ENCODE measurements at regions of chr2 and their contacts with region 1.

Region 1: DNA sequence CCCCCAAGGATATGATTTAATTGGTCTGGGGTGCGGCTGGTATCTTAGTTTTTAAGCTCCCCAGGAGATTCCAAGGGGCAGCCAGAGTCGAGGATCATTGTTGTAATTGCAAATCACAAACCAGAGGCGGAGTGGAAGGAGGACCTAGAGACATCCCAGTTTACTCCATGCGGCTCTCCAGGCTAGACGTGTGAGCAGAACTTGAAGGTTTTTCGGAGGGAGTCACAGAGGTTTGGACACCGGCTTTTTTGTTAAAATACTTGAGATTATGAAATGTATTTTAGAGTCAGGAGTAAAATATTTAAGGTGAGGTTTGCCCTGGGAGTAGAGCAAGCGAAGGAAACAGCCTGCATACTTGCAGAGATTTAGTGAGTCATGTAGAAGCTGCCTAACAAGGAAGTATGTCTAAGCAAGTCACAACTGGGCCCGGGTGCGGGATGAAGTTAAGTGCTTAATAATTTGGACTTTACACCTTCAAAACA is 39.5 kb downstream of the TGOLN2 start:
- DNase-seq: no peak
- ATAC-seq: peak in 2 of 4 donors; percentile 37 to 39
- H3K4me3 ChIP-seq: no peak overlapping the region
- H3K27ac ChIP-seq: no peak overlapping the region
- H3K4me1 ChIP-seq: no peaks in the 10 kb centered on the region
- H3K27me3 ChIP-seq: no peaks in the 10 kb centered on the region
- CTCF ChIP-seq: no peak

Region 2: GRCh38 chr2:85066874-85067351 is 221.4 kb before region 1 on chr2:
- intact Hi-C with region 1: loop called (anchors 5 to 10 kb)
- DNase-seq: peak; percentile 36 to 80 (median 67)
- ATAC-seq: peak; percentile 79 to 97 (median 93)
- H3K4me3 ChIP-seq: peak overlapping the region in 1 of 4 donors; percentile 16
- H3K27ac ChIP-seq: no peak overlapping the region
- H3K4me1 ChIP-seq: no peaks in the 10 kb centered on the region
- H3K27me3 ChIP-seq: no peaks in the 10 kb centered on the region
- CTCF ChIP-seq: peak; percentile 55 to 78 (median 72)

Region 3: GRCh38 chr2:85132834-85133637 is 155.2 kb before region 1 on chr2 and contains the start of gene TCF7L1:
- intact Hi-C with region 1: loop called in 1 of 3 experiments (anchors 10 kb)
- DNase-seq: peak; percentile 64 to 88 (median 78)
- ATAC-seq: peak; percentile 92 to 97 (median 94)
- H3K4me3 ChIP-seq: peak within 1 kb of the TSS; percentile 48 to 69 (median 60)
- H3K27ac ChIP-seq: no peak within 1 kb of the TSS
- H3K4me1 ChIP-seq: no peaks in the 10 kb centered on the region
- H3K27me3 ChIP-seq: no peaks in the 10 kb centered on the region
- CTCF ChIP-seq: peak; percentile 41 to 64 (median 61)
- total RNA-seq, gene TCF7L1: 1.1 to 3.6 (median 1.7) TPM